Endothelial cell of umbilical vein (primary cell): ENCODE measurements at regions of chr3 and their contacts with region 1.

Region 1: GRCh38 chr3:157088601-157089454 is 71.1 kb downstream of the CCNL1 start:
- DNase-seq: peak; percentile 96
- H3K4me3 ChIP-seq: peak overlapping the region; percentile 36 to 61 (median 54)
- H3K27ac ChIP-seq: peak overlapping the region; percentile 86
- H3K4me1 ChIP-seq: peaks cover 26% of the 10 kb centered on the region
- H3K27me3 ChIP-seq: no peaks in the 10 kb centered on the region
- CTCF ChIP-seq: peak in 1 of 2 donors; percentile 9
- POLR2A ChIP-seq: peak; percentile 72

Region 2: GRCh38 chr3:156535162-156535627 is 553.6 kb before region 1 on chr3:
- CTCF ChIA-PET with region 1: interaction called, 21 read pairs
- POLR2A ChIA-PET with region 1: no interaction called
- dilution Hi-C with region 1: no loop called
- intact Hi-C with region 1: loop called (anchors 1 kb)
- DNase-seq: peak; percentile 94
- H3K4me3 ChIP-seq: no peak overlapping the region
- H3K27ac ChIP-seq: peak overlapping the region; percentile 55
- H3K4me1 ChIP-seq: peaks cover 7% of the 10 kb centered on the region
- H3K27me3 ChIP-seq: no peaks in the 10 kb centered on the region
- CTCF ChIP-seq: peak in 1 of 2 donors; percentile 22
- POLR2A ChIP-seq: peak; percentile 58

Region 3: GRCh38 chr3:156681002-156681401 is 407.8 kb before region 1 on chr3:
- CTCF ChIA-PET with region 1: interaction called, 70 read pairs
- POLR2A ChIA-PET with region 1: interaction called, 4 read pairs
- dilution Hi-C with region 1: no loop called
- intact Hi-C with region 1: loop called (anchors 2 kb)
- DNase-seq: peak; percentile 64
- H3K4me3 ChIP-seq: no peak overlapping the region
- H3K27ac ChIP-seq: peak overlapping the region; percentile 30
- H3K4me1 ChIP-seq: peaks cover 68% of the 10 kb centered on the region
- H3K27me3 ChIP-seq: no peaks in the 10 kb centered on the region
- CTCF ChIP-seq: no peak
- POLR2A ChIP-seq: no peak

Region 4: DNA sequence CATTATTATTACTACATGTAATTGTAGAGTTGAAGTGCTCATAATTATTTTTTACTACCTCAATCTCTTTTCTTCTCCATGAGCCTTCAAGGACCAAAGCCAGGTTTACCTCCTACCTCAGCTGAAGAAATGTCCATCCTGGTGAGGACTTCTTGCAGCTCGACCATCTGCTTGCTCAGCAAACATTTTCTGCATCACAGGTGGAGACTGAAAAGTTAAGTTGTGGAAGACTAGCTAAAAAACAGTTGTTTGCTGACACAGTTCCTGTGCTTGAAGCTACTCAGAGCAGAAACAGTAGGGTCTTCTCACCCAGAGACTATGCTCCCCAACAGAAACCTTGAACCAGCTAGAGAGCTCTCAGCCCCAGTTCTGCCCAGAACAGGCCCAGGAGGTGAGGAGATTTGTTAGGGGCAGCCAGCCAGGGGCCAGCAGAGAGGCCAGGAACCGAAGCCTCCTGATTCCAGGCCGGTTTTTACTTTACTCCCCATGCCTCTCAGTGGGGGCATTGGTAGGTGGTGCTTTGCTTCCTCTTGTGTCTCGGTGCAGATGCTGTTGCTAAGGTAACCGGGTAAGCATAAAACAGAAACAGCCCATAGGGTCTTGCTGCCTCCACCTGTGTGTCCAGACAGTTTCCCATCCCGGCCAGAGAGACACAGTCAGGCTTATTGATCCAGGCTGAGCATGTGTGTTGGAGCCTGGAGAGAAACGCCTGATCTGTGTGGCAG is 16.3 kb after region 1 on chr3:
- CTCF ChIA-PET with region 1: interaction called, 12 read pairs
- POLR2A ChIA-PET with region 1: interaction called, 4 read pairs
- dilution Hi-C with region 1: no loop called
- intact Hi-C with region 1: no loop called
- DNase-seq: no peak
- H3K4me3 ChIP-seq: no peak overlapping the region
- H3K27ac ChIP-seq: no peak overlapping the region
- H3K4me1 ChIP-seq: no peaks in the 10 kb centered on the region
- H3K27me3 ChIP-seq: no peaks in the 10 kb centered on the region
- CTCF ChIP-seq: no peak
- POLR2A ChIP-seq: no peak

Region 5: DNA sequence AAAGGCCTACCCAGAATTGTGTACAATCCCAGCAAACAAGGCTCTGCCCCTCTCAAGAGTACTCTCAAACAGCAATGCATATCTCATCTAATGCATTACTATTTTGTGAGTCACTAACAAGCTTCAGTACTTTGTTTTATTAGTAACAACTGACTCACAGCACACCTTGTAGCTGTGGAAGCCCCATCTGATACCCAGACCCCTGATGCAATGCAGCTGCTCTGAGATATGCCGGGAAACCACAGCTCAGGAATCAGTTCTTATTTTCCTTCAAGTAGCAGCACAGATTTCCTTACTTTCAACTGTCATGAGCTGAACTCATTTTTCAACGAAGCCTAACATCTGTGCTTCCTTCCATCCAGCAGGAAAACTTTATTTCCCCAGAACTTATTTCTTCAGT is 33.3 kb after region 1 on chr3:
- CTCF ChIA-PET with region 1: interaction called, 19 read pairs
- POLR2A ChIA-PET with region 1: interaction called, 3 read pairs
- dilution Hi-C with region 1: no loop called
- intact Hi-C with region 1: no loop called
- DNase-seq: peak; percentile 43
- H3K4me3 ChIP-seq: no peak overlapping the region
- H3K27ac ChIP-seq: no peak overlapping the region
- H3K4me1 ChIP-seq: peaks cover 9% of the 10 kb centered on the region
- H3K27me3 ChIP-seq: no peaks in the 10 kb centered on the region
- CTCF ChIP-seq: no peak
- POLR2A ChIP-seq: no peak

Region 6: DNA sequence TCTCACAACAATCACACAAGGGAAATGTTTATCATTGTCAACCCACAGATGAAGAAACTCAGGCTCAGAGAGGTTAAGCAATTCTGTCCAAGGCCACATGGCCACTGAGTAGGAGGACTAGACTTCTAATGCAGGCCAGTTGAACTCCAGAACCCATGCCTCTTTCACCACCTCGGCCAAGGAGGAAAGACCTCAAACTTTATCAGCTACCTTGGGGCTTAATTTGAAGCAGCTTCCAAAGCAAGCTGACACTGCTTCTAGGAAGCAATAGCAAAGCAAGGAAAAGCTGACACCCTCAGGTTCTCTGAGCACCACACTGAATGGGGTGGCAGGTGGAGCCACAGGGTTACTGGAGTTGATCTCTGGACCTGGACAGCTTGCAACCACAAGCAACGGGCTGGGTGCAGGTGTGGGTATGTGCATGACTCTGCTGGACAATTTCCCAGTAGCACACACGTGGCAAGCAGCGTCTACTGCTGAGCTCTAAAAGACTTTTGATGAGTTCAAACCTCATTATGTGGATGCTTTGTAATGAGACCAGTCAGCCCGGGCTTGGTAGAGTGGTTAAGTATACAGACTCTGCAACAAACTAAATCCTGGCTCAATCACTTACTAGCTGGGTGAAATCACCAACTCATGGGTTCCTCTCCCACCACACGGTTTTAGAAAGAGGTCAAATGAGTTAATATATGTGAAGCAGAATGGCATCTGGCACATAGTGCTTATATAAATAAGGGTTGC is 48.0 kb after region 1 on chr3:
- CTCF ChIA-PET with region 1: interaction called, 83 read pairs
- POLR2A ChIA-PET with region 1: no interaction called
- dilution Hi-C with region 1: no loop called
- intact Hi-C with region 1: no loop called
- DNase-seq: no peak
- H3K4me3 ChIP-seq: no peak overlapping the region
- H3K27ac ChIP-seq: no peak overlapping the region
- H3K4me1 ChIP-seq: peaks cover 6% of the 10 kb centered on the region
- H3K27me3 ChIP-seq: no peaks in the 10 kb centered on the region
- CTCF ChIP-seq: no peak
- POLR2A ChIP-seq: no peak